Heart right ventricle (tissue), 16 donors: ENCODE measurements at regions of chr16 and their contacts with region 1.

Region 1: DNA sequence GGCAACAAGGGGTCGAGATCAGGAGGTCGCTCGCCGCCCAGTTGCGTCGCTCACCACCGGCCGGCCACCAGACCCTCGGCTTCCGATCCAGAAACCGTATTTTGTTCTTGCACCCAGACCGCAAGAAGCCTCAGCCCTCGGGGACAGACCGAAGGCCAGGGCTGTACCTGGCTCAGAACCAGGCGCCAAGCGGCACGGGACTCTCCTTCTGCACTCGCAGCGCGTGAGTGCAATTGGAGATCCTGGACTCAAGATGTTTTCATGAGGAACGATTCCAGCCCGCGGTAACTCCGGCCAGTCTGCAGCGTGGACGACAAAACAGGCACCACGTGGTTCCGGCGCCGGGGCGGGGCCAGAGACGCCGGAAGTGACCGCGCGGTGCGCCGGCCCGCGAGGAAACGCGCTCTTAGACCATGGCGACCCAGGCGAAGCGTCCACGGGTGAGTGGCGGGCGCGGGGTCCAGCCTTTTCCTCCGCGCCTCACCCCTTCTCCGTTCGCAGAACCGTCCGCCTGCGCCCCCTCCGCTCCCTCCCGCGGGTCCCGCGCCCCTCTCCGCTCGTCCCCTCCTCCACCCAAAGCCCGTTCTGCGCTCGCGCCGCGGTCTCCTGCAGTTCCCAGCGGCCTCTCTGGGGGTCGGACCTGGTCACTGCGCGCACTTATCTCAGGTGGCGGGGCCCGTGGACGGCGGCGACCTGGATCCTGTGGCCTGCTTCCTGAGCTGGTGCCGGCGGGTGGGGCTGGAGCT is at the start of gene SETD6:
- DNase-seq: peak; percentile 88 to 89
- ATAC-seq: peak; percentile 90 to 96 (median 94)
- H3K4me3 ChIP-seq: peak within 1 kb of the TSS; percentile 56 to 94 (median 84)
- H3K27ac ChIP-seq: peak within 1 kb of the TSS; percentile 61 to 92 (median 84)
- H3K4me1 ChIP-seq: peaks cover 5 to 33% (median 15%) of the 10 kb centered on the region in 9 donors
- H3K27me3 ChIP-seq: no peaks in the 10 kb centered on the region
- CTCF ChIP-seq: peak in 5 of 9 donors; percentile 20 to 48 (median 36)
- total RNA-seq, gene SETD6: 8.9 to 16.0 (median 11.8) TPM

Region 2: GRCh38 chr16:58471321-58471975 is 43.9 kb before region 1 on chr16:
- intact Hi-C with region 1: no loop called
- DNase-seq: no peak
- ATAC-seq: peak; percentile 14 to 61 (median 32)
- H3K4me3 ChIP-seq: no peak overlapping the region
- H3K27ac ChIP-seq: peak overlapping the region in 9 of 10 donors; percentile 30 to 89 (median 72)
- H3K4me1 ChIP-seq: peaks cover 14 to 100% (median 88%) of the 10 kb centered on the region in 9 donors
- H3K27me3 ChIP-seq: peaks cover 0 to 22% (median under 1%) of the 10 kb centered on the region in 7 donors
- CTCF ChIP-seq: no peak

Region 3: DNA sequence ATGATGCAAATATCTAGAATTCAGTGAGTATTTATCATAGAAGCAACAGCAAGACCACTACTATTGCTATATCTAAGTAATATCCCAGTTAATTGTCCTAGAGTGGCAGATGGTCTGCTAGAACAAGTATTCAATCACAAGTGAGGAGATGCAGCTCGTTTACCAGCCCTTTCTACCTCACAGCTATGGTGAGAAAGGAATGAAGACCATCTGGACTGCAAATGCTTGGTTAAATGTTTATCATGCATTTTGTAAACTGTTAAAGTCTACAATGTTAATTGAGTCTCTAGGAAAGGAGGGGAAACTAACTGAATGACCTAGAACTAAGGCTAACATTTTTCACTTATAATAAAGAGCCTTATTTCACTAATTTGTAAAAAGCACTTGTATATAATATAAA is 61.8 kb after region 1 on chr16:
- intact Hi-C with region 1: loop called in 1 of 10 experiments (anchors 5 kb)
- DNase-seq: no peak
- ATAC-seq: no peak
- H3K4me3 ChIP-seq: no peak overlapping the region
- H3K27ac ChIP-seq: peak overlapping the region in 1 of 10 donors; percentile 34
- H3K4me1 ChIP-seq: peaks cover 0 to 17% (median 0%) of the 10 kb centered on the region in 9 donors
- H3K27me3 ChIP-seq: no peaks in the 10 kb centered on the region
- CTCF ChIP-seq: no peak

Region 4: GRCh38 chr16:58629572-58630104 is 114.3 kb after region 1 on chr16 and contains the start of gene CNOT1:
- intact Hi-C with region 1: loop called in 4 of 10 experiments (anchors 5 to 10 kb)
- DNase-seq: peak; percentile 97 to 98
- ATAC-seq: peak; percentile 94 to 96 (median 96)
- H3K4me3 ChIP-seq: peak within 1 kb of the TSS; percentile 82 to 99 (median 94)
- H3K27ac ChIP-seq: peak within 1 kb of the TSS; percentile 93 to 99 (median 98)
- H3K4me1 ChIP-seq: peaks cover 6 to 45% (median 34%) of the 10 kb centered on the region in 9 donors
- H3K27me3 ChIP-seq: no peaks in the 10 kb centered on the region
- CTCF ChIP-seq: no peak
- total RNA-seq, gene CNOT1: 66.9 to 102 (median 88.1) TPM

Region 5: GRCh38 chr16:58661199-58661830 is 146.0 kb after region 1 on chr16:
- intact Hi-C with region 1: loop called in 3 of 10 experiments (anchors 2 to 5 kb)
- DNase-seq: peak in 1 of 2 donors; percentile 49
- ATAC-seq: peak; percentile 77 to 96 (median 86)
- H3K4me3 ChIP-seq: no peak overlapping the region
- H3K27ac ChIP-seq: no peak overlapping the region
- H3K4me1 ChIP-seq: peaks cover 0 to 8% (median 0%) of the 10 kb centered on the region in 9 donors
- H3K27me3 ChIP-seq: no peaks in the 10 kb centered on the region
- CTCF ChIP-seq: peak; percentile 13 to 73 (median 58)

Region 6: GRCh38 chr16:58733671-58734458 is 218.6 kb after region 1 on chr16 and contains the start of gene GOT2:
- intact Hi-C with region 1: loop called in 1 of 10 experiments (anchors 10 kb)
- DNase-seq: peak; percentile 77 to 85
- ATAC-seq: peak; percentile 94 to 98 (median 97)
- H3K4me3 ChIP-seq: peak within 1 kb of the TSS; percentile 74 to 99 (median 92)
- H3K27ac ChIP-seq: peak within 1 kb of the TSS; percentile 74 to 94 (median 89)
- H3K4me1 ChIP-seq: peaks cover 0 to 55% (median 33%) of the 10 kb centered on the region in 9 donors
- H3K27me3 ChIP-seq: no peaks in the 10 kb centered on the region
- CTCF ChIP-seq: peak; percentile 75 to 98 (median 91)
- total RNA-seq, gene GOT2: 379 to 658 (median 556) TPM

Region 7: GRCh38 chr16:58755989-58756649 is 240.8 kb after region 1 on chr16:
- intact Hi-C with region 1: loop called in 1 of 10 experiments (anchors 5 kb)
- DNase-seq: peak; percentile 62 to 67
- ATAC-seq: peak; percentile 88 to 95 (median 92)
- H3K4me3 ChIP-seq: no peak overlapping the region
- H3K27ac ChIP-seq: no peak overlapping the region
- H3K4me1 ChIP-seq: peaks cover 0 to 10% (median 0%) of the 10 kb centered on the region in 9 donors
- H3K27me3 ChIP-seq: no peaks in the 10 kb centered on the region
- CTCF ChIP-seq: peak; percentile 38 to 82 (median 71)